Transverse colon (tissue), 4 donors: ENCODE measurements at regions of chr2 and their contacts with region 1.

Region 1: GRCh38 chr2:16756831-16757644 is 91.4 kb upstream of the CYRIA start:
- DNase-seq: peak; percentile 82
- H3K4me3 ChIP-seq: no peak overlapping the region
- H3K27ac ChIP-seq: no peak overlapping the region
- H3K4me1 ChIP-seq: no peaks in the 10 kb centered on the region
- H3K27me3 ChIP-seq: no peaks in the 10 kb centered on the region
- CTCF ChIP-seq: peak; percentile 86 to 90 (median 87)
- EP300 ChIP-seq: no peak
- POLR2A ChIP-seq: no peak

Region 2: DNA sequence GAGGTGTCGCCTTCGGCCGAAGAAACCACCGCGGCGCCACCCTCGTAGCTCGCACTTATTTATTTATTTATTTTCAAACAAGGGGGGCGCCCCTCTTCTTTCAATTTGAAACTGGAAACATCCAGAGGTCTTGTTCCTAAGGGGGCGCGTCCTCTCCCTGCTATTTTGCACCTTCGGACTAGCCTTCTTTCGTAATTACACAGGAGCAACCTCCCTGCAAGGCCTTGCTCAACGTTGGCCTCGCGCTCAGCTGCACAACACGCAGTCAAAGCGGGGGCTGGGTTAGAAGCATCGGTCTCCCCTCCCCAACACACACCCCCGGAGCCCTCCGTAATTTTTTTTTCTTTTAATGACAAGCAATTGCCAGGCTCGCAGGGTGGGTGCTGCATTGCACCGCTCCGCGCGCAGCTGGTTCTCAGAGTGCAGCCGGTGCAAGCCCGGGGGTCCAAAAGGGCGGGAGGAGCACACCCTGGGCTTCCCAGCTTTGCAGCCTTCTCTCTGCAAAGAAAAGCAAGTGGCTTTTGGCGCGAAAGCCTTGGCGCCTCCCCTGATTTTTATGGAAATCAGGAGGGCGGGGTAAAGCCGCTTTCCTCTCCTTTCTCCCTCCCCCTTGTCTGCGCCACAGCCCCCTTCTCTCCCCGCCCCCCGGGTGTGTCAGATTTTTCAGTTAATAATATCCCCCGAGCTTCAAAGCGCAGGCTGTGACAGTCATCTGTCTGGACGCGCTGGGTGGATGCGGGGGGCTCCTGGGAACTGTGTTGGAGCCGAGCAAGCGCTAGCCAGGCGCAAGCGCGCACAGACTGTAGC is 817.0 kb before region 1 on chr2 and contains the start of gene MYCN:
- in situ Hi-C with region 1: loop called in 1 of 4 experiments (anchors 25 kb)
- intact Hi-C with region 1: no loop called
- DNase-seq: peak; percentile 42
- H3K4me3 ChIP-seq: peak within 1 kb of the TSS; percentile 3 to 66 (median 41)
- H3K27ac ChIP-seq: peak within 1 kb of the TSS in 1 of 4 donors; percentile 55
- H3K4me1 ChIP-seq: peaks cover 12 to 52% (median 35%) of the 10 kb centered on the region in 4 donors
- H3K27me3 ChIP-seq: peaks cover 42% of the 10 kb centered on the region
- CTCF ChIP-seq: peak; percentile 64 to 73 (median 69)
- EP300 ChIP-seq: no peak
- POLR2A ChIP-seq: no peak
- total RNA-seq, gene MYCN: 0.48 to 7.0 (median 0.82) TPM in 3 of 4 donors, not detected in the other

Region 3: DNA sequence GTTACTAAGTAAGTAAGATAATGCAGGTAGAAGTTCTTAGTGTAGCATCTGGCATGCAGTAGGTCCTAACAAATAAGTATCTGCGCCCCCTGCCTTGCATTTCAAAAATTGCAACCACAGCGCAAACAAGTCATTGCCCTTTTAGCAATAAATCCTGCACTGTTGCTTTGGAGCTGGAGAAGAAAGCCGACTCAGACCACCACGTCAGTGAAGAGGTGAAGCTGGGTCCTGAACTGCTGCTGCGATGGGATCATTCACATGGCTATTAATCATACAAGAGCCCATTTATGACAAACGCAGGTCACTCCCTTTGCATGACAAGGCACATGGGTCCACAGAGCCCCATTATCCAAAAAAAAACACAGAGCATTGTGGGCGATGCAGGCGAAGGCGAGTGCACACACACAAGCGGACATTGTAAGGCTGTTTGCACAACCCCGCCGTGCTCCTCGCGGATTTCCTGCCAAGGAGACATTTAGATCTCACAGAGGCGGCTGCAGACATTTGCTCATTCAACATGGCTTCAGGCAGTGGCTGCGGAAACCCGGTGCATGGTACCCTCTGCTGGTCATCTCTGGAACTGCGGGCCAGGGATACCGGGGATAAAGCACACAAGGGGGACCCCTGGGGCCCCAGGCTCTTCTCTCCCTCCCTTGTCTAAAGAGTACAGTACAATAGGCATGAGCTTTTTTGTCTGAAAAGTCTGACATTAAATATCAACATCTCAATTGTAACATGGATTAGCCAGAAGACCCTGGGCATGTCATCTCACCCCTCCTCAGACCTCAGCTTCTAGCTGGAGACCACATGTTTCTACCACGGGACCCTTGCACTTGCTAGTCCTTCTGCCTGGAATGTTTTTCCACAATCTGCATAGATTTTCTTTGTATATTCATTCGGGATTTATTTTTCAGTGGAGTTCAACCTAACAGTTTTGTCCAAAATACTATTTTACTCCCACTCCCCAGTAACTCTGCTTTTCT is 148.1 kb before region 1 on chr2:
- in situ Hi-C with region 1: loop called in 3 of 4 experiments (anchors 5 to 10 kb)
- intact Hi-C with region 1: loop called (anchors 2 kb)
- DNase-seq: peak; percentile 84
- H3K4me3 ChIP-seq: peak overlapping the region in 3 of 4 donors; percentile 24 to 48 (median 34)
- H3K27ac ChIP-seq: peak overlapping the region in 3 of 4 donors; percentile 23 to 48 (median 41)
- H3K4me1 ChIP-seq: peaks cover 0 to 15% (median 3%) of the 10 kb centered on the region in 4 donors
- H3K27me3 ChIP-seq: no peaks in the 10 kb centered on the region
- CTCF ChIP-seq: peak; percentile 78 to 97 (median 93)
- EP300 ChIP-seq: no peak
- POLR2A ChIP-seq: no peak

Region 4: DNA sequence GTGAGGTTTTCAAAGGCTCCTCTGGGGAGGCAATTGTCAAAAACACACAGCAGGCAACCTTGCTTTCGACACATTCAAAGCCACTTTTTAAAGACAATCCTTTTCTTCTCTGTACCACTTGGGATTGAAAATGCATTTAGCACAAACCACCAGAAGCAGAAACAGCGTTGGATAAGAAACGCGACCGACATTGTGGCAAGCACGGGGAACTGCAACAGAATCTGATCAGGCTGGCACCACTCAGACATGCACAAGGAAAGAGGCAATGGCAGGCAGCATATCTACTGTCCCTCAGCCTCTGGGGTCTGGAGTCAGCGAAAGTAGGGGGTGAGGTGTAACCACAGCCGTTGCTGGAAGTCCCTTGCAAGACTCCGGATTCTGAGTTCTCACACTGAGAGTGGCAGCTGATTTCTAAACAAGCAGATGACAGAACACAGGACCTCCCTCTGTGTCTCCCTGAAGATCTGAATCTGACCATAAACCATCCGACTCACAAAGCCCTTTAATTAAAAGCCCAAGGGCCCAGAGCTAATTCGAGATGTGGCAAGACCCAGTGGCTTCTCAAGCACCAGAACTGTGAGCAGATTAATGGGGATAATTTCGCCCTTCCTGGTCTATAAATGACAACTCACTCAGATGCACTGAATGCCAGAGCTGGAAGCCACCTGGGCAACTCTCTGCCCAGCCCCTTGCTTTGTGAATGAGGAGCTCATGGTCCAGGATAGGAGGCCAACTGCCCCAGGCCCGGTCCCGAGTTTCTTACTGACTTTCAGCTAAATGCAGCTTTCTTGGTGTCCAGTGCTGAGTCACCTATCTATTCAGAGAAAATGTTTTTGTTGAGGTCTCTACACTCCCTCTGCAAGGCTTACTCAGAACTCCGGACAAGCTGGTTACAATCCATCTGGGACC is 121.0 kb before region 1 on chr2:
- in situ Hi-C with region 1: no loop called
- intact Hi-C with region 1: loop called (anchors 5 kb)
- DNase-seq: no peak
- H3K4me3 ChIP-seq: no peak overlapping the region
- H3K27ac ChIP-seq: no peak overlapping the region
- H3K4me1 ChIP-seq: peaks cover 0 to 14% (median 8%) of the 10 kb centered on the region in 4 donors
- H3K27me3 ChIP-seq: no peaks in the 10 kb centered on the region
- CTCF ChIP-seq: no peak
- EP300 ChIP-seq: no peak
- POLR2A ChIP-seq: no peak

Region 5: GRCh38 chr2:16821692-16822091 is 64.7 kb after region 1 on chr2:
- in situ Hi-C with region 1: no loop called
- intact Hi-C with region 1: no loop called
- DNase-seq: no peak
- H3K4me3 ChIP-seq: no peak overlapping the region
- H3K27ac ChIP-seq: no peak overlapping the region
- H3K4me1 ChIP-seq: no peaks in the 10 kb centered on the region
- H3K27me3 ChIP-seq: no peaks in the 10 kb centered on the region
- CTCF ChIP-seq: no peak
- EP300 ChIP-seq: no peak
- POLR2A ChIP-seq: no peak